ENCODE measurements at regions of chrX and their contacts with region 1.

Region 1: GRCh38 chrX:46903458-46904242 is 8.6 kb upstream of the JADE3 start:
- DNase-seq: peak; percentile 62
- H3K4me3 Mint-ChIP-seq: no peak overlapping the region
- H3K27ac Mint-ChIP-seq: no peak overlapping the region
- H3K4me1 Mint-ChIP-seq: no peaks in the 10 kb centered on the region
- H3K27me3 Mint-ChIP-seq: peaks cover 18% of the 10 kb centered on the region

Region 2: GRCh38 chrX:46978341-46979291 is 75.0 kb after region 1 on chrX:
- CTCF ChIA-PET with region 1: interaction called, 12 read pairs
- DNase-seq: peak; percentile 83
- H3K4me3 Mint-ChIP-seq: no peak overlapping the region
- H3K27ac Mint-ChIP-seq: no peak overlapping the region
- H3K4me1 Mint-ChIP-seq: no peaks in the 10 kb centered on the region
- H3K27me3 Mint-ChIP-seq: peaks cover 5% of the 10 kb centered on the region

Region 3: GRCh38 chrX:47093248-47093647 is 189.6 kb after region 1 on chrX:
- CTCF ChIA-PET with region 1: interaction called, 10 read pairs
- DNase-seq: no peak
- H3K4me3 Mint-ChIP-seq: no peak overlapping the region
- H3K27ac Mint-ChIP-seq: no peak overlapping the region
- H3K4me1 Mint-ChIP-seq: peaks cover 9% of the 10 kb centered on the region
- H3K27me3 Mint-ChIP-seq: no peaks in the 10 kb centered on the region

Measured in activated naive CD4-positive, alpha-beta T cell treated with anti-CD3 and anti-CD28 coated beads, Interleukin-2, amount 10 ng/mL, durations not matched to agents 7 days and 5 days (primary cell).